ENCODE measurements at regions of chr14 and their contacts with region 1.

Region 1: GRCh38 chr14:104078031-104078455 is 7.5 kb upstream of the ASPG start:
- DNase-seq: peak; percentile 94
- H3K4me3 Mint-ChIP-seq: no peak overlapping the region
- H3K27ac Mint-ChIP-seq: no peak overlapping the region
- H3K4me1 Mint-ChIP-seq: peaks cover 8% of the 10 kb centered on the region
- H3K27me3 Mint-ChIP-seq: peaks cover 5% of the 10 kb centered on the region

Region 2: DNA sequence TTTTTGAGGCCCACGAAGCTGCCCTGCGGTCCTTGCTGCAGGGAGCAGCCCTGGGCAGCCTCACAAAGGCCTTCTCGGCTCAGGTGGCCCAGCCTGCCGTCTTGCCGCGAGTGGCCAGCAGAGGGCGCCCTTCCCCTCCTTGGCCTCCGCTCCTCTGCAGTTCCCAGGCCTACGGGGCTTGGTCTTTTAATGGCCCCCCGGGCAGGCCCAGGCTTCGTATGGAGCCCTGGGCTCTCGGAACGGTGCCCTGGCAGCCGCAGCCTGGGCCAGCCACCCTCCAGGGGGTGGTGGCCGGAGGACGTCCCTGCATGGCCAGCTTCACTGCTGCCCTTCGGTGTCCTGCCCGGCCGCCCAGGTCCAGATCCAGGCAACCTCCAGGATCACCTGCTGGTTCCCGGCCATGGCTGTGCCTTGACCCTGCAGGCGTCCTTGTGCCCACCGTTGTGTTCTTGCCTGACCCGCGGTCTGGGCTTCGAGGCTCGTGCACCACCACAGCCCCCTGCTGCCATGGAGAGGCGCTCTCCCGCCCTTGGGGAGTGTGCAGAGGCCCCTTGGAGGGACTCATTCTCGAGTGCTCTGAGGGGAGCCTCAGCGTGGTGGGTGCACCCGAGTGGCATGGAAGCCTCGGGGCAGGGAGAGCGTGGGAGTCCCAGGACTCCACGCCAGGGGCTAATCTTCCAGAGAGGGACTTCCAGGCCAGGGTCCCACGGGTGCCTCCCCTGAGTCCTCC is 16.8 kb after region 1 on chr14:
- CTCF ChIA-PET with region 1: interaction called, 32 read pairs
- intact Hi-C with region 1: loop called (anchors 1 kb)
- DNase-seq: peak; percentile 83
- H3K4me3 Mint-ChIP-seq: no peak overlapping the region
- H3K27ac Mint-ChIP-seq: no peak overlapping the region
- H3K4me1 Mint-ChIP-seq: peaks cover 4% of the 10 kb centered on the region
- H3K27me3 Mint-ChIP-seq: peaks cover 3% of the 10 kb centered on the region

Region 3: DNA sequence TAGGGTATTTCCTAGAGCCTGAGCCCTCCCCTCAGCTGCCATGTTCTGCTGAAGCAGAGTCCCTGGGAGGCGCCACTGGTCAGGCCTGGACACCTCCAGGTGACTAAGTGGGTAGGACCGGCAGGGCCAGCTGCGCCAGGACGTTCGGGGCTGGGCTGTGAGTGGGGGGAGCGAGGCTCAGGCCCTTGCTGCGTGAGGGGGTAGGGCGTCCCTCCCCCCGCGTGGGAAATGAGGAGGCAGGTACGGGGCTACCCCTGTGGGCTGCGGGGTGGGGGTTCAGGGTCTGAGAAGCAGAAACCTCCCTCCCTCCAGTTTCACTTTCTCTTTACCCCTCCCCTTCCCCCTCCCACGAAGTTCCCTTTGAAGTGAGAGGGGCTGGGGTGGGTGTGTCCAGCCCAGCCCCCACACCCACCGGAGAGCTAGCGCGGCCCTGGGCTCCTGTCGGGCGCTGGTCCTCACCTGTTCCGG is 38.3 kb after region 1 on chr14:
- CTCF ChIA-PET with region 1: no interaction called
- intact Hi-C with region 1: no loop called
- DNase-seq: no peak
- H3K4me3 Mint-ChIP-seq: peak overlapping the region; percentile 38
- H3K27ac Mint-ChIP-seq: no peak overlapping the region
- H3K4me1 Mint-ChIP-seq: no peaks in the 10 kb centered on the region
- H3K27me3 Mint-ChIP-seq: peaks cover 25% of the 10 kb centered on the region

Region 4: GRCh38 chr14:104130974-104131651 is 53.1 kb after region 1 on chr14:
- CTCF ChIA-PET with region 1: interaction called, 8 read pairs
- intact Hi-C with region 1: loop called (anchors 1 kb)
- DNase-seq: peak; percentile 35
- H3K4me3 Mint-ChIP-seq: no peak overlapping the region
- H3K27ac Mint-ChIP-seq: no peak overlapping the region
- H3K4me1 Mint-ChIP-seq: peaks cover 3% of the 10 kb centered on the region
- H3K27me3 Mint-ChIP-seq: peaks cover 38% of the 10 kb centered on the region

Region 5: DNA sequence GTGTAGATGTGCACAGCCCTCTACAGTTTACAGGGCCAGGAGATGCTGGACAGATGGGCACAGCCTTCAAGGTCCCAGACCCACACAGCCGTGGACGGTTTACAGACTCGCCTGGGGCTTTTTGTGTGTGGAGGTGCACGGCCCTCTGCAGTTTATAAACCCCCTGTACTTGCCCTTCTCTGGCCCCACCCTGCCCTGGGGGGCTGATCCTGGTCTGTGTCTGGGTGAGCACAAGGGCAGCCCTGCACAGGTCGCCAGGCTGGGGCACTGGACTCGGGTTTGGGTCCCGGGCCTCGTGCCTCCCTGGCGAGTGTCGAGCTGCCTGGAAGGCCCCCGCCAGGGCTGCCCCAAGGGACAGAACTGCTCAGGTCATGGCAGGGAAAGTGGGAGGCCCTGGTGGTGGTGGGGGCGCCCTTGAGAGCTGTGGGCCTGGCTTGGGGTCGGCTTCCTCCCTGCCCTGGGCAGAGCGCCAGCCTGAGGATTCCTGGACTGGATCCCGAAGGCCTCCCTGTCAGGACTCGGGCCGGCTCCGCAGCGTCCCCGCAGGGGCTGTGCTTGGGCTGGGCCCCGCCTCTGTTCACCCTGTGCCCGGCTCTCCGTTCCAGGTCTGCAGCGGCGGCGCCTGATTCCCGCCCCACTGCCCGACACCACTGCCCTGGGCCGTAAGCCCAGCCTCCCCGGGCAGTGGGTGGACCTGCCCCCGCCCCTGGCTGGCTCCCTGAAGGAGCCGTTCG is 100.1 kb after region 1 on chr14:
- CTCF ChIA-PET with region 1: no interaction called
- intact Hi-C with region 1: no loop called
- DNase-seq: no peak
- H3K4me3 Mint-ChIP-seq: no peak overlapping the region
- H3K27ac Mint-ChIP-seq: no peak overlapping the region
- H3K4me1 Mint-ChIP-seq: no peaks in the 10 kb centered on the region
- H3K27me3 Mint-ChIP-seq: no peaks in the 10 kb centered on the region

Region 6: GRCh38 chr14:104563742-104564615 is 485.9 kb after region 1 on chr14:
- CTCF ChIA-PET with region 1: interaction called, 11 read pairs
- intact Hi-C with region 1: loop called (anchors 1 kb)
- DNase-seq: peak; percentile 80
- H3K4me3 Mint-ChIP-seq: no peak overlapping the region
- H3K27ac Mint-ChIP-seq: no peak overlapping the region
- H3K4me1 Mint-ChIP-seq: peaks cover 3% of the 10 kb centered on the region
- H3K27me3 Mint-ChIP-seq: peaks cover 14% of the 10 kb centered on the region

Measured in activated naive CD4-positive, alpha-beta T cell treated with anti-CD3 and anti-CD28 coated beads for 36 hours (primary cell).